GM10248 (cell line): ENCODE measurements at regions of chr20 and their contacts with region 1.

Region 1: DNA sequence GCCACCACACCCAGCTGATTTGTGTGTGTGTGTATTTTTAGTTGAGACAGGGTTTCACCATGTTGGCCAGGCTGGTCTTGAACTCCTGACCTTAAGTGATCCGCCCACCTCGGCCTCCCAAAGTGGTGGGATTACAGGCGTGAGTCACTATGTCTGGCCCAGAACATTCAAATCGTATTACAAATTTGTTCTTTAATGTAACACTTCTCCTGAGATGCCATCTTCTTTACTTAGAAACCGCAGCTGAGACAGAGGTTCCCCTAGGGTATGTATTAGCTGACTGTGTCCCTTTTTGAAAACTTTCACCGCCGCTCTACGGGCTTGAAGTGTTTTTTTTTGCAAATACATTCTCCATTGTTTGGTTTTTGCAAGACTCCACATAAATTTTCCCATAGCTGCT is 62.6 kb downstream of the TOX2 start:
- DNase-seq: no peak
- CTCF ChIP-seq: no peak

Region 2: GRCh38 chr20:43824309-43825050 is 152.8 kb before region 1 on chr20:
- CTCF ChIA-PET with region 1: no interaction called
- POLR2A ChIA-PET with region 1: no interaction called
- DNase-seq: no peak
- CTCF ChIP-seq: no peak

Region 3: GRCh38 chr20:43988867-43989266 is 11.6 kb after region 1 on chr20:
- CTCF ChIA-PET with region 1: interaction called, 16 read pairs
- POLR2A ChIA-PET with region 1: no interaction called
- DNase-seq: no peak
- CTCF ChIP-seq: no peak